Posterior cingulate gyrus (tissue), 11 donors: ENCODE measurements at regions of chr6 and their contacts with region 1.

Region 1: GRCh38 chr6:1596088-1596852 is 13.4 kb upstream of the FOXC1 start:
- DNase-seq: peak in 9 of 10 donors; percentile 47 to 95 (median 69)

Region 2: DNA sequence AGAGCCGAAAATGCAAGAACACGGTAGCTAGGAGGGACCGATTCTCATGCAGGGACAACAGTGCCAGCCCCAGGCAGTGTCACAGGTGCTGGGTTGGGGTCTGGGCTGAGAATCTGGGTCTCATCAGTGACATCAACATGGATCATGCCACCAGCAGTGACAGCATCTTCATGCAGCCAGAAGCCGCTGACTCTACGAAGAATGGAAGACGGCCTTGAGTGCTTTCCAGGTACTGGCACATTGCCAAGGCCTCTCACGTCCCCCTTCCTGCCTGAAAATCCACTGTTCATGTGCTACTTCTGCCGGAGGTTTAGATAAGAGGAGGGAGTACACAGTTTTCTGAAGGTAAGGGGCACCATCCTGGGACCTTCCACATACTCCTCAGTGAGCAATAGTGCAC is 425.5 kb before region 1 on chr6:
- intact Hi-C with region 1: no loop called
- DNase-seq: no peak

Region 3: GRCh38 chr6:1424306-1424928 is 171.9 kb before region 1 on chr6:
- intact Hi-C with region 1: no loop called
- DNase-seq: peak in 5 of 10 donors; percentile 31 to 82 (median 44)

Region 4: DNA sequence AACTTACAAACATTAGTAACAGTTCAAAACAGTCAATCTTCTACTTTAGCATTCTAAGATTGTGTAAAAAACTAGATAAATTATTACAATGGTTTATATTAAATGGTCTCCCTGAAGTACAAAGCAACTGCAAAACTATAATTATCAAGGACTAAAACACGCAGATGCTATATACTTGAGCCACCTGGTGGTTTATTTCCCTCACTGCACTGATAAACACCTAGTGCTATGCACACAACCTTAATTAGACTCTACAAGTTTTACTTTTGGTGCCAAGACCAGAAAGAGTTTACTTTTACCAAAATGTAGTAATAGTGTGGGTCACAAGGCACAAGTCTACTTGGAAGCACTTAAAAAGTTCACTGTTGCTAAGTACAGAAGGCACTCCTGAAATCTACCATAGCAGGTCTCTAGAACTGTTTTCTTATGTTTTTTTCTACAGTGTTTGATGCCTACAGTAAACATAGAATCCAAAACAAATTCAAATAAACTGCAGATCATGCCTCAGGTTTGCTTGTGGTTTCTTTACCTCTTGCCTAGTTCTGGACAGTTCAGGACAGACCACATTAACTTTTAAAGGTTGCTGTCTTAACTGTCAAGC is 599.9 kb after region 1 on chr6:
- intact Hi-C with region 1: loop called (anchors 2 kb)
- DNase-seq: no peak

Region 5: GRCh38 chr6:2353412-2354137 is 757.3 kb after region 1 on chr6:
- intact Hi-C with region 1: loop called (anchors 2 kb)
- DNase-seq: peak in 6 of 10 donors; percentile 48 to 89 (median 56)

Region 6: DNA sequence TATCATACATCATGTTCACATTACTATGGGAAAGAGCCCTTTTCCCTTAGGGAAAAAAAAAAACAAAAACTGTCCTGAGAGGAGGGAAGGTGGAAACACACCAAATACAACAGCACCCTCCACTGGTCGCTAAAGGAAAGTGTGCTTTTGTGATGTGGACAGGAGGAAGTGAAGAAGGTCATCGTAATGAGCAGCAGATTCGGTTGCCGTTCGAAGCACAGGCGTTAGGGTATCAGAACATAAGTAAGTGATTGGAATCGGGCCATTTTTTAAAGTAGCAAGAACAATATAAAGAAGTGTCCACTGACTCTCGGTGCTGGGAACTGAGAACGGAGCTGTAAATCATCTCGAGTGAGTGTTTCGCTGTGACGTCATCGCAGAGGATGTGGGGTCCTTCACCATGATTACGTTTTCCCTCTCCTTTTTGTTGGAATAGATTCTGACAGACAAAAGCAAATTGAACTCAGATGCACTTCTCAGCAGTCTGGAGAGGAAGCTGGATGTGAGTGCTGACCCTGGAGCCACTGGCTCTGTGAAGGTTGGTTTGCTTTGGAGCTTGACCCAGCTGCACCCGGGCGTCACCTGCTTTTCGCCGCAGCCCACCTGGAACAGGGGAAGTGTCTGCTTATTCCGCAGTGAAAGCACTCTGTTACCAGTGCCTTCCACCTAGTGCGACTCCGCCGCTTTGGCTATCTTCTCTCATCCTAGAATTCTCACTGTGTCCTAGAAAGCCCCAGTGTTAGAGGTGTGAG is 852.7 kb after region 1 on chr6:
- intact Hi-C with region 1: loop called (anchors 5 kb)
- DNase-seq: peak in 1 of 10 donors; percentile 18

Region 7: GRCh38 chr6:2634139-2634964 is 1038.1 kb after region 1 on chr6:
- intact Hi-C with region 1: loop called (anchors 1 kb)
- DNase-seq: peak; percentile 64 to 97 (median 82)

Region 8: DNA sequence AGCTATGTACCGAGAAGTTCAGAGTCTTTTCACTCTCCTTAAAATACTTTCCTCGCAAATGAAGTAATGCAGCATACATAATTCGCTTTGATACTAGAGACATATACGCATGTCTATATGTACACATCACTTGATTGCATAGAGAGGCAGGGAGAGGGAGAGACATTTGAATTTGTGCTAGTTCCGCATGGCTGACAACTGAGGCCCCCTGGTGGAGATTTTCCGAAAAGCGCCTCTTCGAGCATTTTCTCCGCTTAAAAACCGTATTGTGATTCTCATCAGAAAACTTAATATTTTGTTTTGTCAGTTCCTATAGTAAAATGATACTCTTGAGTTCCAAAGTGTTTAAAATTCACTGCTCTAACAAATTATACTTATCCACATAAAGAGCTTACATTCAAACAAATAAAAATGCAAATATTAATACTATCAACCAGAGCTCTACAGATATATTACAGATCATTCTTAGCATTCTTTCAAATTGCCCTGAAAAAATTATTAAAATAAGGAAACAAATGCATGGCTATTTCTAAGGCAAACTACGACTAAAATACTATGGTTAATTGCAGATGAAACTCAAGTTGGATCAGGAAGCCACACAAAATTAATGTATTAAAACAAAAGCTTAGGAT is 1153.8 kb after region 1 on chr6:
- intact Hi-C with region 1: loop called (anchors 5 kb)
- DNase-seq: peak in 9 of 10 donors; percentile 30 to 94 (median 79)